GM12878 (cell line): ENCODE measurements at regions of chr22 and their contacts with region 1.

Region 1: GRCh38 chr22:35128637-35129036 is 62.7 kb downstream of the ISX start:
- DNase-seq: peak; percentile 95
- ATAC-seq: peak; percentile 78
- H3K4me3 ChIP-seq: no peak overlapping the region
- H3K27ac ChIP-seq: peak overlapping the region; percentile 99
- H3K4me1 ChIP-seq: peaks cover 80% of the 10 kb centered on the region
- H3K27me3 ChIP-seq: no peaks in the 10 kb centered on the region
- CTCF ChIP-seq: no peak
- EP300 ChIP-seq: peak; percentile 81 to 95
- POLR2A ChIP-seq: no peak
- RAD21 ChIP-seq: peak; percentile 13; the same call in 1 of the 2 replicates

Region 2: DNA sequence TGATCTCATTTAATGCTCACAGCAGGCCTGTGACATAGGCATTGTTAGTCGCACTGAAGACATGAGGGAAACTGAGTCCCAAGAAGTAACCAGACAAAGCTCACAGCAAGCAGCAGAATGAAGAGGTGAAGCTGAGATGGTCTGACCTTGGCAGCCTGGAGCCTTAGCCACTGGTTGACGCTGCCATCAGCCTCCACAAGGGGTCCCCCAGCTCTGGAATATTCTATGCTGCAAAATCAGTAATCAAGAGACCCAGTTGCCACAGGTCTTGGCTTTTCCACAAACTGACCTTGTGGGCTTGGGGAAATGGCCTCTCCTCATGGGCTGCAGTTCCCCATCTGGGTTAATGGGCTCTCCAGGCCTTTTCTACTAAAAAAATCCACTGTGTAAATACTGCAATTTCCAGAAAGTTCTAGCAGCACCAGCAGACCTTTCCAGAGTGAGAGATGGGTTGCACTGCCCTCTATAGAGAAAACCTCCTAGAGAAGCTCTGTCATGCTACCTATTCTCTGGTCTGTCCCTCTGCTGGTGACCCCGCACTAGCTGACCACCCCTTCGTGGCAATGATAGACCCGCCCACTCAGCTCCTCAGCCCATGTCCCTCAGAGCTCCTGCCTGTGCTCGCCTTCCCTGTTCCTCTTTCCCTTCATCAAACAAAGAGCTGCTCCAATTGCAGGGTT is 85.2 kb before region 1 on chr22:
- CTCF ChIA-PET with region 1: interaction called, 6 read pairs
- POLR2A ChIA-PET with region 1: interaction called, 6 read pairs
- RAD21 ChIA-PET with region 1: interaction called, 7 read pairs
- SMC1A ChIA-PET with region 1: interaction called, 18 read pairs
- in situ Hi-C with region 1: no loop called
- intact Hi-C with region 1: no loop called
- DNase-seq: no peak
- ATAC-seq: peak; percentile 85
- H3K4me3 ChIP-seq: no peak overlapping the region
- H3K27ac ChIP-seq: no peak overlapping the region
- H3K4me1 ChIP-seq: peaks cover 21% of the 10 kb centered on the region
- H3K27me3 ChIP-seq: no peaks in the 10 kb centered on the region
- CTCF ChIP-seq: peak; percentile 44 to 51 (median 48)
- EP300 ChIP-seq: no peak
- POLR2A ChIP-seq: no peak
- RAD21 ChIP-seq: peak; percentile 76

Region 3: DNA sequence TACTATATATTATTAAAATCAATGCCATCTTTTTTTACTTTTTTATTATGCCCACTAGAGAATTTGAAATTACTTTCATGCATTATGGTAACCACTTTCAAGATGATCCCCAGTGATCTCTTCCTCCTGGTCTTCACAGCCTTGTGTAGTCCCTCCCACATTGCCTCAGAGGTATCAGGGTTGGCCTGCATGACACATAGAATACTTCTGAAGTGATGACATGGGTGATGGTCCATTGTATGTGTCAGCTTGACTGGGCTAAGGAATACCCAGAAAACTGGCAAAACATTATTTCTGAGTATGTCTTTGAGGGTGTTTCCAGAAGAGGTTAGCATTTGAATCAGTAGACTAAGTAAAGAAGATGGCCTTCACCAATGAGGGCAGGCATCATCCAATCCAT is 76.8 kb before region 1 on chr22:
- CTCF ChIA-PET with region 1: interaction called, 4 read pairs
- POLR2A ChIA-PET with region 1: interaction called, 10 read pairs
- RAD21 ChIA-PET with region 1: interaction called, 28 read pairs
- SMC1A ChIA-PET with region 1: interaction called, 58 read pairs
- in situ Hi-C with region 1: no loop called
- intact Hi-C with region 1: loop called (anchors 1 kb)
- DNase-seq: no peak
- ATAC-seq: peak; percentile 73
- H3K4me3 ChIP-seq: no peak overlapping the region
- H3K27ac ChIP-seq: no peak overlapping the region
- H3K4me1 ChIP-seq: peaks cover 21% of the 10 kb centered on the region
- H3K27me3 ChIP-seq: no peaks in the 10 kb centered on the region
- CTCF ChIP-seq: no peak
- EP300 ChIP-seq: no peak
- POLR2A ChIP-seq: no peak
- RAD21 ChIP-seq: no peak

Region 4: GRCh38 chr22:35140879-35141745 is 12.5 kb after region 1 on chr22:
- CTCF ChIA-PET with region 1: interaction called, 13 read pairs
- POLR2A ChIA-PET with region 1: interaction called, 3 read pairs
- RAD21 ChIA-PET with region 1: interaction called, 22 read pairs
- SMC1A ChIA-PET with region 1: interaction called, 9 read pairs
- in situ Hi-C with region 1: no loop called
- intact Hi-C with region 1: no loop called
- DNase-seq: no peak
- ATAC-seq: peak; percentile 89
- H3K4me3 ChIP-seq: no peak overlapping the region
- H3K27ac ChIP-seq: peak overlapping the region; percentile 46
- H3K4me1 ChIP-seq: peaks cover 17% of the 10 kb centered on the region
- H3K27me3 ChIP-seq: no peaks in the 10 kb centered on the region
- CTCF ChIP-seq: peak; percentile 61 to 75 (median 68)
- EP300 ChIP-seq: no peak
- POLR2A ChIP-seq: no peak
- RAD21 ChIP-seq: peak; percentile 86

Region 5: GRCh38 chr22:35275580-35275979 is 146.9 kb after region 1 on chr22:
- CTCF ChIA-PET with region 1: no interaction called
- POLR2A ChIA-PET with region 1: no interaction called
- RAD21 ChIA-PET with region 1: no interaction called
- SMC1A ChIA-PET with region 1: no interaction called
- in situ Hi-C with region 1: no loop called
- intact Hi-C with region 1: no loop called
- DNase-seq: no peak
- ATAC-seq: no peak
- H3K4me3 ChIP-seq: no peak overlapping the region
- H3K27ac ChIP-seq: no peak overlapping the region
- H3K4me1 ChIP-seq: no peaks in the 10 kb centered on the region
- H3K27me3 ChIP-seq: no peaks in the 10 kb centered on the region
- CTCF ChIP-seq: no peak
- EP300 ChIP-seq: no peak
- POLR2A ChIP-seq: no peak
- RAD21 ChIP-seq: no peak

Region 6: GRCh38 chr22:35312198-35313059 is 183.8 kb after region 1 on chr22:
- CTCF ChIA-PET with region 1: no interaction called
- POLR2A ChIA-PET with region 1: no interaction called
- RAD21 ChIA-PET with region 1: interaction called, 3 read pairs
- SMC1A ChIA-PET with region 1: no interaction called
- in situ Hi-C with region 1: no loop called
- intact Hi-C with region 1: loop called (anchors 5 kb)
- DNase-seq: no peak
- ATAC-seq: no peak
- H3K4me3 ChIP-seq: no peak overlapping the region
- H3K27ac ChIP-seq: peak overlapping the region; percentile 72
- H3K4me1 ChIP-seq: peaks cover 61% of the 10 kb centered on the region
- H3K27me3 ChIP-seq: no peaks in the 10 kb centered on the region
- CTCF ChIP-seq: no peak
- EP300 ChIP-seq: no peak
- POLR2A ChIP-seq: no peak
- RAD21 ChIP-seq: no peak